GM13977 (cell line): ENCODE measurements at regions of chr21 and their contacts with region 1.

Region 1: DNA sequence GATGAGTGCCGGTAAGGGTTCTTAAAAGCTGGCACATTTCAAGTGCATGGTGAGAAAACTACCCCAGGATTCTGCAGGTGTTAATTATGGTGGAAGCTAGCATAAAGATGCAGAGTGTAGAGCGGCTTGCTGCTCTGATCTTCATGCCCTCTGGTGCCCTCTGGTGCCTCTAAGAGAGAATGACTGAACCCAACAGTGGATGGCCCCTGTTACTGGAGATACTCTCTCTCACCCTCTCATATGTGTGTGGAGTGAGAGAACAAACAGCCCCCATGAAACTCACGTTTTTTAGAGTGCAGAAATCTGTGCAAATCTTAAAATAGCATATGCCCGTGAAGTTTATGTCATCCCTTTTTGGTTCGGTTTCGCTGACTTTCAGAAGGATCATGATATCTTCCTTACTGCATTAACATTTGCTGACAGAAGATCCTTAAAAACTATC is 90.0 kb downstream of the GRIK1 start:
- DNase-seq: peak; percentile 40
- CTCF ChIP-seq: peak; percentile 82

Region 2: DNA sequence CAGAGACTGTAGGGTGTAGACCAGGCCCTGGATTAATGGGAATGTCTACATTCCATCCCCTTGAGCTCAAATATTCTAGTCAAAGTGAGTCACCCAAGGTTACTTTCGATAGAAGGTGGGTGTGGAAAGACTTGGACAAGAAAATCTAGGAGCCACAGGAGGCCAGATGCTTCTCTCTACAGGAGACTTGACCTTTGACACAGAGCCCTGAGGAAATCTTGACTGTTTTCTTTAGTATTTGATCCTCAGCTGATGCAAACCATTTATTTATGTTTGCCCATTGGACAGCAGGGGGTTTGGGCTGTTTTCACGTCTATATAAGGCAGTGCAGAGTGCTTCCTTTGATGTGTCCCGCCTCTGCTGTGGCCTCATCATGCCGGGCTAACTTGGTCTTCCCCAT is 735.0 kb before region 1 on chr21:
- in situ Hi-C with region 1: loop called (anchors 25 kb)
- DNase-seq: no peak
- CTCF ChIP-seq: no peak

Region 3: DNA sequence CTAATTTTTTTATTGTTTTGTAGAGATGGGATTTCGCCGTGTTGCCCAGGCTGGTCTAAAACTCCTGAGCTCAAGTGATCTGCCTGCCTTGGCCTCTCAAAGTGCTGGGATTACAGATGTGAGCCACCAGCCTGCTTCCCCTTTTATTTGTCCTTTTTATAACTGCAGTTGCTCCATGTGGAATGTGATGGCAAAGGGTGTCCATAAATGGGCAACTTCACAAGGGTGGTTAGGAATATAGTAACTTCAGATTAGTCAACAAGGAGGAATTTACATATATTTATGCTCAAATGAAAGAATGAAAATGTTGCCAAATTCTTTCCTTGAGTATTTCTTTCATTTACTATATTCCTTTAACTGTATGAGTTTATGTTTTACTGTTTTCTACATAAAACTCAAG is 368.1 kb before region 1 on chr21:
- in situ Hi-C with region 1: loop called (anchors 10 kb)
- DNase-seq: no peak
- CTCF ChIP-seq: no peak

Region 4: GRCh38 chr21:29613021-29613420 is 236.7 kb before region 1 on chr21:
- in situ Hi-C with region 1: no loop called
- DNase-seq: no peak
- CTCF ChIP-seq: no peak

Region 5: DNA sequence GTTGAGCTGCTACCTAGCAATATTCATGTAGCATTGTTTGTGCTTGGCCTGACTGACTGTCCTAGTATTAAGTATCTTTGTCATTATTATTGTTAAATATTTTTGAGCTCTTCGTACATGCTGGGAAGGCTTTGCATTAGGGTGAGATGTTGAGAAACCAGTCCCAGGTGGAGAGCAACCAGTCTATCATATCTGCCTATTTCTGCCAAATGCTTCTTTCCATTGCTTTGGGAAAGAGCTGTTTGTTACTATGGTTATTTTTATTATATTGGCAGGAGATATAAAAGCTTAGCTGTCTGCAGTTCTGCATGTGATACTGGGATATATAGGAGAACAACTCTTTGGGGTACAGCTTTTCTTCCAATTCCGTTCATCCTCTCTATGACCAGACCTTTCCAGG is 231.8 kb after region 1 on chr21:
- in situ Hi-C with region 1: no loop called
- DNase-seq: no peak
- CTCF ChIP-seq: no peak

Region 6: GRCh38 chr21:30138483-30138882 is 288.7 kb after region 1 on chr21:
- in situ Hi-C with region 1: no loop called
- DNase-seq: no peak
- CTCF ChIP-seq: no peak